CD8-positive, alpha-beta memory T cell (primary cell): ENCODE measurements at regions of chr11 and their contacts with region 1.

Region 1: DNA sequence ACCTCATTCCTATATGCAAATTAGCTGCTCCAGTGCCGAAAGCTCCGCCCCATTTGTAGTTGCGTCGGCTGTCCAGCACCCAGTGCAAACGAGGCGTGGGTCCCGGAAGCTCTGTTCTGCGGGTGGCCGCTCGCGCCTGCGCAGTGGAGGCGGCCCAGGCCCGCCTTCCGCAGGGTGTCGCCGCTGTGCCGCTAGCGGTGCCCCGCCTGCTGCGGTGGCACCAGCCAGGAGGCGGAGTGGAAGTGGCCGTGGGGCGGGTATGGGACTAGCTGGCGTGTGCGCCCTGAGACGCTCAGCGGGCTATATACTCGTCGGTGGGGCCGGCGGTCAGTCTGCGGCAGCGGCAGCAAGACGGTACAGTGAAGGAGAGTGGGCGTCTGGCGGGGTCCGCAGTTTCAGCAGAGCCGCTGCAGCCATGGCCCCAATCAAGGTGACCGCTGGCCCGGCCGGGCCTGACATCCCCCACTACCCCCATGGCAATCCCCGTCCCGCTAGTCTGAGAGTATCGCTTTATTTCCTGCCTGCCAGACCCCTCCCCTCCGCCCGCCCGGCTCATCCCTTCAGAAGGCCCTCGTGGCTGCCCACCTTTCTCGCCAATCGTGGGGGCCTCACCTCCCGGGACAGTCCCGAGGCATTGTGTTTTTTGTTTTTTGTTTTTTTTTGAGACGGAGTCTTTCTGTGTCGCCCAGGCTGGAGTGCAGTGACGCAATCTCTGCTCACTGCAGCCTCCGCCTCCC is at the start of gene PRDX5:
- DNase-seq: peak; percentile 92 to 98 (median 97)
- H3K4me3 ChIP-seq: peak within 1 kb of the TSS; percentile 93
- H3K4me3 Mint-ChIP-seq: peak within 1 kb of the TSS; percentile 89 to 97 (median 94)
- H3K27ac ChIP-seq: peak within 1 kb of the TSS; percentile 97
- H3K27ac Mint-ChIP-seq: peak within 1 kb of the TSS; percentile 98 to 100 (median 99)
- H3K4me1 ChIP-seq: peaks cover 14% of the 10 kb centered on the region
- H3K4me1 Mint-ChIP-seq: peaks cover 29 to 43% (median 31%) of the 10 kb centered on the region in 3 donors
- H3K27me3 ChIP-seq: no peaks in the 10 kb centered on the region
- H3K27me3 Mint-ChIP-seq: peaks cover 0 to 7% of the 10 kb centered on the region in 2 donors
- total RNA-seq, gene PRDX5: 114 to 126 TPM

Region 2: GRCh38 chr11:64240394-64241174 is 77.5 kb before region 1 on chr11 and contains the start of gene FKBP2:
- CTCF ChIA-PET with region 1: interaction called, 5 read pairs
- POLR2A ChIA-PET with region 1: interaction called, 11 read pairs
- DNase-seq: peak; percentile 97 to 99 (median 99)
- H3K4me3 ChIP-seq: peak within 1 kb of the TSS; percentile 76
- H3K4me3 Mint-ChIP-seq: peak within 1 kb of the TSS; percentile 87 to 97 (median 90)
- H3K27ac ChIP-seq: peak within 1 kb of the TSS; percentile 99
- H3K27ac Mint-ChIP-seq: peak within 1 kb of the TSS; percentile 99 to 100 (median 100)
- H3K4me1 ChIP-seq: peaks cover 36% of the 10 kb centered on the region
- H3K4me1 Mint-ChIP-seq: peaks cover 18 to 62% (median 23%) of the 10 kb centered on the region in 3 donors
- H3K27me3 ChIP-seq: no peaks in the 10 kb centered on the region
- H3K27me3 Mint-ChIP-seq: no peaks in the 10 kb centered on the region
- total RNA-seq, gene FKBP2: 27.9 to 28.4 TPM

Region 3: GRCh38 chr11:64298966-64299846 is 18.9 kb before region 1 on chr11:
- CTCF ChIA-PET with region 1: interaction called, 34 read pairs
- POLR2A ChIA-PET with region 1: interaction called, 42 read pairs
- DNase-seq: peak in 1 of 5 donors; percentile 19
- H3K4me3 ChIP-seq: no peak overlapping the region
- H3K4me3 Mint-ChIP-seq: peak overlapping the region; percentile 11 to 86 (median 77)
- H3K27ac ChIP-seq: no peak overlapping the region
- H3K27ac Mint-ChIP-seq: peak overlapping the region in 6 of 8 donors; percentile 34 to 78 (median 38)
- H3K4me1 ChIP-seq: peaks cover 22% of the 10 kb centered on the region
- H3K4me1 Mint-ChIP-seq: peaks cover 18 to 36% (median 20%) of the 10 kb centered on the region in 3 donors
- H3K27me3 ChIP-seq: peaks cover 64% of the 10 kb centered on the region
- H3K27me3 Mint-ChIP-seq: peaks cover 58 to 66% of the 10 kb centered on the region in 2 donors

Region 4: DNA sequence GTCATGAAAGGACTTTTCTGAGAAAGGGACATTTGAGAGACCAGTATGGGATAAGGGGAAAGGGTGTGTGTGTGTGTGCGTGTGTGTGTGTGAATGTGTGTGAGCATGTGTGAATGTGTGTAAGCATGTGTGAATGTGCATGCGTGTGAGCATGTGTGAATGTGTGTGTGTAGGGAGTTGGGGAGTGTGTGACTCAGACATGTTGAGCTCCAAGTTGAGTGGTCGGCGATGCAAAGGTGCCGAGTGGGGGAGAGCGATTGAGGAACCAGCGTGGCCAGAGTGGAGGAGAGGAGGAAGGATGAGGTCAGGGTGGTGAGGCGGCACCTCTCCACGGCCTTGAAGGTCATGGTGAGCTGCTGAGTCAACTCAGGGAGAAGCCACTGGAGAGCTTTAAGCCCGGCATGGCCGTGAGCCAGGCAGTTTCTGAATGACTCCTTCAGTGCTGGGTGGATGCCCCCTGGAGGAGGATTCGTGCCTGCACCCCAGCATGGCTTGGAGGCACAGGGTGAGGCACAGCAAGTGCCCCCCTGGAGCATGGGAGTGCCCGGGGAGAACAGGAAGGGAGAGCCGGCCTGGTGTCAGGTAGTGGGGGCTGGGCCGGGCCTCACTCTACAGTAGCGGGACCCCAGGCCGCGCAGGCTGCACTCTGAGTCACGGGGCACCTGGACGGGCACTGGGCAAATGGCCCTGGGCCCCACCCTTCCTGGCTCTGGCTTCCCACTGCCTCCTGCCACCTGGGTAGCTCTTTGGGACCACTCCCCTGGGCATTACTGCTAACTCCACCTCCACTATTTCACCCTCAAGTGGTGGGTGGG is 13.6 kb after region 1 on chr11:
- CTCF ChIA-PET with region 1: interaction called, 61 read pairs
- POLR2A ChIA-PET with region 1: interaction called, 14 read pairs
- DNase-seq: peak; percentile 55 to 82 (median 60)
- H3K4me3 ChIP-seq: no peak overlapping the region
- H3K4me3 Mint-ChIP-seq: peak overlapping the region in 6 of 7 donors; percentile 14 to 70 (median 59)
- H3K27ac ChIP-seq: peak overlapping the region; percentile 38
- H3K27ac Mint-ChIP-seq: peak overlapping the region; percentile 0 to 94 (median 71)
- H3K4me1 ChIP-seq: peaks cover 12% of the 10 kb centered on the region
- H3K4me1 Mint-ChIP-seq: peaks cover 7 to 13% (median 9%) of the 10 kb centered on the region in 3 donors
- H3K27me3 ChIP-seq: no peaks in the 10 kb centered on the region
- H3K27me3 Mint-ChIP-seq: no peaks in the 10 kb centered on the region

Region 5: GRCh38 chr11:64358907-64359711 is 41.0 kb after region 1 on chr11 and contains the start of gene RPS6KA4:
- CTCF ChIA-PET with region 1: interaction called, 8 read pairs
- POLR2A ChIA-PET with region 1: interaction called, 15 read pairs
- DNase-seq: peak; percentile 35 to 61 (median 43)
- H3K4me3 ChIP-seq: peak within 1 kb of the TSS; percentile 77
- H3K4me3 Mint-ChIP-seq: peak within 1 kb of the TSS; percentile 83 to 94 (median 89)
- H3K27ac ChIP-seq: peak within 1 kb of the TSS; percentile 76
- H3K27ac Mint-ChIP-seq: peak within 1 kb of the TSS; percentile 19 to 96 (median 80)
- H3K4me1 ChIP-seq: peaks cover 22% of the 10 kb centered on the region
- H3K4me1 Mint-ChIP-seq: peaks cover 24 to 42% (median 30%) of the 10 kb centered on the region in 3 donors
- H3K27me3 ChIP-seq: no peaks in the 10 kb centered on the region
- H3K27me3 Mint-ChIP-seq: no peaks in the 10 kb centered on the region
- total RNA-seq, gene RPS6KA4: 38.0 to 39.0 TPM